ENCODE measurements at regions of chr2 and their contacts with region 1.

Region 1: GRCh38 chr2:237923481-237924163 is 43.2 kb upstream of the UBE2F start:
- DNase-seq: no peak
- H3K4me3 ChIP-seq: peak overlapping the region; percentile 43
- CTCF ChIP-seq: peak; percentile 95

Region 2: GRCh38 chr2:237858294-237859081 is 65.1 kb before region 1 on chr2:
- CTCF ChIA-PET with region 1: interaction called, 10 read pairs
- POLR2A ChIA-PET with region 1: no interaction called
- DNase-seq: peak; percentile 33
- H3K4me3 ChIP-seq: no peak overlapping the region; the same call in 1 of the 2 replicates
- CTCF ChIP-seq: peak; percentile 94

Region 3: DNA sequence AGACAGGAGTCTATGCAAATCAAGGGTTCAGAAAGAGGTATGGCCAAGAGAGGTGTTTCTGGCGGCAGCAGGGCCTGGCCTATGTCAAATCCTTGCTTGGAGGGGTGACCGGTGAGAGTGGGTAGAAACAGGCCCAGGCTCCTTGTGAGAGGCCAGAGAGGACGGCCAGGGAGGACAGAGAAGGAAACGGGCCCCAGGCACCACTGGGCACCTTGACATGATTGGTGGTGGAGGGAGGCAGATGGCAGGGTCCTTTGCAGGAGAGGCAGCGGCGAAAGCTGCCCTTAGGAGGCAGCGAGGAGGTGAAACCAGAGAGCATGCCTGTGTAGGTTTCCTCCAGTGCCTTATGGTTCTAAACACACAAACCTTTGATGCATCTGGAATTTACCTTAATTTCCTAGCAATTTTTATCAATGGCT is 58.0 kb before region 1 on chr2:
- CTCF ChIA-PET with region 1: interaction called, 15 read pairs
- POLR2A ChIA-PET with region 1: no interaction called
- DNase-seq: no peak
- H3K4me3 ChIP-seq: no peak overlapping the region
- CTCF ChIP-seq: peak; percentile 9

Region 4: GRCh38 chr2:237901932-237902845 is 21.4 kb before region 1 on chr2:
- CTCF ChIA-PET with region 1: interaction called, 10 read pairs
- POLR2A ChIA-PET with region 1: no interaction called
- DNase-seq: no peak
- H3K4me3 ChIP-seq: no peak overlapping the region
- CTCF ChIP-seq: no peak

Region 5: DNA sequence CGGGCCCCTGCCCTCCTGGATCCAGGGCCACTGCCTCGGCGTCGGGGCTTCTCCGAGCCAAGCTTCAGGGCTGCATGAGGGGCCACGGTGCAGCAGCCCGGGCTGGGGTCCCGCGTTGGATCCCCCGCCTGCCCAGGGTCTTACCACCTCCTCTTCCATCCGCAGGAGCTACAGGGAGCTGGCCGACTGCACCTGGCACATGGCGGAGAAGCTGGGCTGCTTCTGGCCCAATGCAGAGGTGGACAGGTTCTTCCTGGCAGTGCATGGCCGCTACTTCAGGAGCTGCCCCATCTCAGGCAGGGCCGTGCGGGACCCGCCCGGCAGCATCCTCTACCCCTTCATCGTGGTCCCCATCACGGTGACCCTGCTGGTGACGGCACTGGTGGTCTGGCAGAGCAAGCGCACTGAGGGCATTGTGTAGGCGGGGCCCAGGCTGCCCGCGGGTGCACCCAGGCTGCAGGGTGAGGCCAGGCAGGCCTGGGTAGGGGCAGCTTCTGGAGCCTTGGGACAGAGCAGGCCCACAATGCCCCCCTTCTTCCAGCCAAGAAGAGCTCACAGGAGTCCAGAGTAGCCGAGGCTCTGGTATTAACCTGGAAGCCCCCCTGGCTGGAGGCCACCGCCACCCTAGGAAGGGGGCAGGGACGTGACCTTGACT is 12.1 kb before region 1 on chr2:
- CTCF ChIA-PET with region 1: interaction called, 20 read pairs
- POLR2A ChIA-PET with region 1: no interaction called
- DNase-seq: no peak
- H3K4me3 ChIP-seq: no peak overlapping the region
- CTCF ChIP-seq: no peak

Region 6: GRCh38 chr2:237939227-237939626 is 15.6 kb after region 1 on chr2:
- CTCF ChIA-PET with region 1: interaction called, 41 read pairs
- POLR2A ChIA-PET with region 1: no interaction called
- DNase-seq: no peak
- H3K4me3 ChIP-seq: no peak overlapping the region
- CTCF ChIP-seq: no peak

Region 7: DNA sequence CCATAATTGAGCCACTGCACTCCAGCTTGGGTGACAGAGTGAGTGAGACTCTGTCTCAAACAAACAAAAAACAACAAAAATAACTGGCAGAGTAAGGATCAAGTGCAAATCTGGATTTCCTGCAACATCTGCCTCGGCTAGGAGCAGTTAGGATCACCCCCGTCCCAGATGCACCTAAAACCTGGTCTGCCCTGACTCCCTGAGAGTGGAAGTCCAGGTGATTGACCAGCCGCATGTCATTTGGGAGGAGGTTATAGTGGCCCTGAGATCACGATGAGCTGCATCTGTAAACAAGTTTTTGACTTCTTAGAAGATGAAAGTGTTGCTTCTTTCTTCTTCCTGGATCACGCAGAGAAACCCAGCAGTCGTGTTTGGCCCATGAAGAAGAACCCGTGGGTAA is 171.5 kb after region 1 on chr2:
- CTCF ChIA-PET with region 1: no interaction called
- POLR2A ChIA-PET with region 1: no interaction called
- DNase-seq: no peak
- H3K4me3 ChIP-seq: no peak overlapping the region
- CTCF ChIP-seq: no peak

Region 8: DNA sequence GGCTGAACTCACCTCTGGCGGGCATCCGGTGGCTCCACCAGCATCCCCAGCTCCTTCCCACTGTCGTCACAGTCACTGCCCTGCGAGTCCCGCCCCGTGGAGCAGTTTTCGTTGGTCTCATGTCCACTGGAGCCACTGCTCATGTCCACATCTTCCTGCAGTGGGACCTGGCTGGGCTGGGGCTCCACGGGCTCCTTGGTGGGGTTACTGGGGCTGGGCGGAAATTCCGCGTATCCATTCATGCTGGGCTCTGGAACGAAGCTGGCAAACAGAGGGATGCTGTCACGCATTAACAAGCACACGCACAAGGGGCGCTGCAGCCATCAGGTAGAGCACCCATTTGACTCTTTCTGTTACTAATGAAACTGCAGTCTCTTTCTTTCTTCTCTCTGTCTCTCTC is 354.1 kb after region 1 on chr2:
- CTCF ChIA-PET with region 1: no interaction called
- POLR2A ChIA-PET with region 1: no interaction called
- DNase-seq: no peak
- H3K4me3 ChIP-seq: no peak overlapping the region
- CTCF ChIP-seq: no peak

Measured in AG04449 (cell line).